T-cell (primary cell): ENCODE measurements at regions of chr6 and their contacts with region 1.

Region 1: GRCh38 chr6:35370785-35371493 is 28.6 kb downstream of the PPARD start:
- DNase-seq: peak in 1 of 35 experiments; percentile 11
- ATAC-seq: no peak
- H3K4me3 ChIP-seq: peak overlapping the region in 1 of 2 donors; percentile 5
- H3K4me3 Mint-ChIP-seq: peak overlapping the region in 2 of 3 donors; percentile 26 to 79
- H3K27ac ChIP-seq: peak overlapping the region; percentile 40
- H3K27ac Mint-ChIP-seq: peak overlapping the region; percentile 86 to 89
- H3K4me1 ChIP-seq: peaks cover 26 to 41% of the 10 kb centered on the region in 2 experiments
- H3K4me1 Mint-ChIP-seq: peaks cover 51 to 67% (median 62%) of the 10 kb centered on the region in 3 donors
- H3K27me3 ChIP-seq: no peaks in the 10 kb centered on the region
- H3K27me3 Mint-ChIP-seq: no peaks in the 10 kb centered on the region

Region 2: DNA sequence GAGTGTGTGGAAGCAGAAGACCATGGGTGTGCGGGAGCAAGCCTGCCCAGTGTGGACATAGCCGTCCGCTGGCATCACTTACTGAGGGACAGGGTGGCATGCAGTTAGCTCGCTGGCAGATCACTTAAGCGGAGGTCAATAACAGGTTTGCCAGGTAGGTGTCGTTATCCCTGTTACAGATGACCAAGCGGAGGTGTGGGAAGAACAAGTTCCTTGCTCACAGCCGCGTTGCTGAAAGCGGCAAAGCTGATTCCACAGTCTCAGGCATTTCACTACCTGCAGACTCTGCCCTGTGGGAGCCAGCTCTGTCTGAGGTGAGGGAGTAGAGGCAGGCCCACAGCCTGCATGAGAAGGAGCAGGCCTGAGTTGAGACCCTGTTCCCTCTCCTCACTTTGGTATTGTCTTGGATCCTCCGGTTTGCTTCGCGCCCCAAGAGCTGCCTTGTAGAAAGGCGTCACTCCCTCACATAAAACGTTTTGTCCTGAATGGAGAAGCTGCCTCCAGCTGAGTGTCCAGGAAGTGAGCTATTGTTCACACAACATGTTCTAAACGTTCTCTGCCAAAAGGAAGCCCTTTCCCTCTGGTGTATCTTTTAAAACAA is 326.7 kb before region 1 on chr6:
- CTCF ChIA-PET with region 1: no interaction called
- POLR2A ChIA-PET with region 1: no interaction called
- DNase-seq: no peak
- ATAC-seq: no peak
- H3K4me3 ChIP-seq: no peak overlapping the region
- H3K4me3 Mint-ChIP-seq: no peak overlapping the region
- H3K27ac ChIP-seq: no peak overlapping the region
- H3K27ac Mint-ChIP-seq: no peak overlapping the region
- H3K4me1 ChIP-seq: peaks cover 14 to 23% of the 10 kb centered on the region in 2 experiments
- H3K4me1 Mint-ChIP-seq: peaks cover 0 to 19% (median 11%) of the 10 kb centered on the region in 3 donors
- H3K27me3 ChIP-seq: no peaks in the 10 kb centered on the region
- H3K27me3 Mint-ChIP-seq: no peaks in the 10 kb centered on the region

Region 3: DNA sequence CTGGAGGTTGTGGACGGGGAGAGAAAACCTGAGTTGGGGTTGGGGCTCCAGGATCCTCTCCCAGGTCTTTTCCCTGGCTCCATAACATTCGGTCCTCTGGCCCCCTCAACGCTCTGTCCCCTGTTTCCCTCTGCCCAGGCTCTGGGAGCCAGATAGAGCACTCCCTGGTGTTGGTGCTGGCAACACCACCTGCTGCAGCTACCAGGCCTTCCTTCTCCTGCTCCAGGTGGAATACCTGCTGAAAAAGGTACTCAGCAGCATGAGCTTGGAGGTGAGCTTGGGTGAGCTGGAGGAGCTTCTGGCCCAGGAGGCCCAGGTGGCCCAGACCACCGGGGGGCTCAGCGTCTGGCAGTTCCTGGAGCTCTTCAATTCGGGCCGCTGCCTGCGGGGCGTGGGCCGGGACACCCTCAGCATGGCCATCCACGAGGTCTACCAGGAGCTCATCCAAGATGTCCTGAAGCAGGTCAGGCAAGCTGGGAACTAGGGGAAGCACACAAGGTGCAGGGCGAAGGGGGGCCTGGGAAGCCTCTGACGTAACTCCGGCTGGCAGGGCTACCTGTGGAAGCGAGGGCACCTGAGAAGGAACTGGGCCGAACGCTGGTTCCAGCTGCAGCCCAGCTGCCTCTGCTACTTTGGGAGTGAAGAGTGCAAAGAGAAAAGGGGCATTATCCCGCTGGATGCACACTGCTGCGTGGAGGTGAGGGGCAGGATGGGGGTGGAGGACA is 58.7 kb before region 1 on chr6:
- CTCF ChIA-PET with region 1: no interaction called
- POLR2A ChIA-PET with region 1: interaction called in 1 of 2 experiments, 11 read pairs
- DNase-seq: peak in 1 of 35 experiments; percentile 25
- ATAC-seq: peak in 3 of 4 experiments; percentile 3 to 7 (median 3)
- H3K4me3 ChIP-seq: peak overlapping the region; percentile 41 to 53
- H3K4me3 Mint-ChIP-seq: peak overlapping the region; percentile 70 to 79 (median 78)
- H3K27ac ChIP-seq: peak overlapping the region; percentile 88
- H3K27ac Mint-ChIP-seq: peak overlapping the region; percentile 99
- H3K4me1 ChIP-seq: peaks cover 60 to 65% of the 10 kb centered on the region in 2 experiments
- H3K4me1 Mint-ChIP-seq: peaks cover 92 to 95% (median 93%) of the 10 kb centered on the region in 3 donors
- H3K27me3 ChIP-seq: no peaks in the 10 kb centered on the region
- H3K27me3 Mint-ChIP-seq: no peaks in the 10 kb centered on the region

Region 4: DNA sequence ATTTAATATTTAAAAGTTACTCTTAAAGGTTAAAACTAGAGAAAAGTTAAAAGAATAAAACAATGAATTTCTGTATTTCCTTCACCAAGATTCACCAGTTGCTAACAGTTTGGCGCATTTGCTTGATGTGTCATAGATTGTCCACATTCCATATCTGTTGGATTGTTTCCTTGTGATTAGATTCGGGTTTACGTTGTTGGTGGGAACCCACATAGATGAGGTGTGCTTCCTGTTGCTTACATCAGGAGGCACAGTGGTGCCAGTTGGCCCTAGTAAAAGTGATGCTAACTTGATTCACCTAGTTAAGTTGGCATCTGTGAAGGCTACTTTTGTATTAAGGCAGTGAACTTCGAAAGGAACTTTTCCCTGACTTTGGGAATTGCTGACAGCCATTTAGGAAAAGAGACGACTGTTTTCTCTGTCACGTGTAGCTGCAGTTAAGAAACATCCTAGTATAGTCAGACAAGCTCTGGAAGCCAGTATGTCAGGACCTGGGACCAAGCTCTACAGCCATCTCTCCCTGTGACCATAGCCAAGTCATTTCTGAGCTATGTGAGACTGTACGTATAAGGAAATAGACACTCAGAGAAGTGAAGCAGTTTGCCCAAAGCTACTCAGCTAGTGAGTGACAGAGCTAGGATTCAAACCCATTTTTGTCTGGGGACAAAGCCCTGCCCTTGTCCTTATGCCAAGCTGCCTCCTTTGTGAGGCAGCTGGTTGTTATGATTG is 20.5 kb after region 1 on chr6:
- CTCF ChIA-PET with region 1: no interaction called
- POLR2A ChIA-PET with region 1: no interaction called
- DNase-seq: peak in 7 of 35 experiments; percentile 5 to 45 (median 10)
- ATAC-seq: peak; percentile 40 to 77 (median 56)
- H3K4me3 ChIP-seq: no peak overlapping the region
- H3K4me3 Mint-ChIP-seq: no peak overlapping the region
- H3K27ac ChIP-seq: no peak overlapping the region
- H3K27ac Mint-ChIP-seq: peak overlapping the region; percentile 74 to 81
- H3K4me1 ChIP-seq: peaks cover 12 to 41% of the 10 kb centered on the region in 2 experiments
- H3K4me1 Mint-ChIP-seq: peaks cover 63 to 68% (median 68%) of the 10 kb centered on the region in 3 donors
- H3K27me3 ChIP-seq: no peaks in the 10 kb centered on the region
- H3K27me3 Mint-ChIP-seq: no peaks in the 10 kb centered on the region